ENCODE measurements at regions of chr1 and their contacts with region 1.

Region 1: GRCh38 chr1:150561974-150562445 is 12.8 kb downstream of the ADAMTSL4 start:
- DNase-seq: peak; percentile 94
- ATAC-seq: peak; percentile 48
- H3K4me3 Mint-ChIP-seq: peak overlapping the region; percentile 88
- H3K27ac Mint-ChIP-seq: peak overlapping the region; percentile 99
- H3K4me1 Mint-ChIP-seq: peaks cover 47% of the 10 kb centered on the region
- H3K27me3 Mint-ChIP-seq: no peaks in the 10 kb centered on the region
- CTCF ChIP-seq: no peak

Region 2: DNA sequence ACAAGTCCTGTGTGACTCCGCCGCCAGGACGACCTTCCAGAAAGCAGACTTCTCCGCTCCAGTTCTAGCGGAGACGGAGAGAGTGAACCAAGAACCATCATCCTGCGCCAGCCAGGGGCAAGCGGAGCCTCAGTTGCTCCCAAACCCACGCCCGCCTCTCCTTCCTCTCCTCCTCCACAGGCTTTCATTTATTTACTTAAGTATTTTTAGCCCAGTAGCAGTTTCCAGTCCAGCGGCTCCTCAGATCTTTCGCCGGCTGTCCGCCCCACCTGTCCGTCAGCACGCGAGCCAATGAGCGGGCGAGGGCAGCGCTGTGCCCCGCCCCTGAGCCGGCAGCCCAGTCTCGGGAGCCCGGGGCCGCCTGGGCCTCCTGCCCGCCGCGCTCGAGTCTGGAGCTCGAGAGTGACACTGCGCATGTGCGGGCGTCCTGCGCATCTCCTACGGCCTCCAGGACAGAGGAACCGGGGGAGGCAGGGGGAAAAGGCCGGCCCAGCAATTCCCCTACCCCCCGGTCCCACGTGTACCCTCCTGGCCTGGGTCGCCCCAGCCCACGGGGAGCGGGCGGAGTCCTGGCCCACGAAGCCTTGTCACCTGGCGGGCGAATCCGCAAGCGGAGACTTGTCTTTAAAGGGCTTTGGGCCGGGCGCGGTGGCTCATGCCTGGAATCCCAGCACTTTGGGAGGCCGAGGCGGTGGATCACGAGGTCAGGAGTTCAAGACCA is 46.5 kb before region 1 on chr1 and contains the start of gene FALEC:
- CTCF ChIA-PET with region 1: interaction called, 21 read pairs
- POLR2A ChIA-PET with region 1: interaction called, 3 read pairs
- intact Hi-C with region 1: no loop called
- DNase-seq: peak; percentile 92
- ATAC-seq: peak; percentile 100
- H3K4me3 Mint-ChIP-seq: peak within 1 kb of the TSS; percentile 92
- H3K27ac Mint-ChIP-seq: peak within 1 kb of the TSS; percentile 64
- H3K4me1 Mint-ChIP-seq: peaks cover 12% of the 10 kb centered on the region
- H3K27me3 Mint-ChIP-seq: no peaks in the 10 kb centered on the region
- CTCF ChIP-seq: no peak
- total RNA-seq, gene FALEC: not detected

Region 3: DNA sequence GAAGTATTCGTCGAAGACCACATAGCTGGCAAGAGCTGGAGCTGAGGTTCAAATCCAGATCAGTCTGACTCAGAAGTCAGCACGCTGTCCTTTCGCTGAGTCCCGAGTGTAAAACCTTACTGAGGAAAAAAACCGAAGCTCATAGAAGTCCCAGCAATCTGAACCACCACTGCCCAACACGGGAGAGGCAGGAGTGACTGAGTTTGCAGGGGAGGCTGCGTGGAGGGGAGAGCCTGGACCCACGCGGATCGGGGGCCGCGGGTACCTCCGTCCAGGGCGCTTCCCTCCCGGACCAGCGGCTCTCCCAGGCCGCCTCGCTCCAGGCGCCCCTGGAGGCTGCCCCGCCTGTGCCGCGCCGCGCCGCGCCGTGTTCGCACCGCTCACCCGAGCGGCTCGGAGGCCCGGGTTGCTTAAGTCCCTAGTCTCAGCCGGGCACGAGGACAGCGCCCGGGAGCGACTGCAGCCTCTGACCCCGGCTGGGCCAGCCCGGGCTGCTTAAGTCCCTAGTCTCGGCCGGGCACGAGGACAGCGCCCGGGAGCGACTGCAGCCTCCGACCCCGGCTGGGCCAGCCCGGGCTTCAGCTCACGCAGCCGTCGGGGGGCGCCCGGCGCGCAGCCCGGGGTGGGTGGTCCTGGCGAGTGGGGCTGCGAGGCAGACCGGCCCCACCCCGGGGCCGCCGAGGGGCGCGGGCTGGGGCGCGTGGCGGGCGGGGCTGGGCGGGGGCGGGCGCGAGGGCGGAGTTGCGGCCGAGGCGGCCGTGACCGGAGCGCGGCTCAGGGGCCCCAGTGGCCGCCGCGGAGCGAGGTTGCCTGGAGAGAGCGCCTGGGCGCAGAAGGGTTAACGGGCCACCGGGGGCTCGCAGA is 13.1 kb before region 1 on chr1 and contains the start of gene ADAMTSL4:
- CTCF ChIA-PET with region 1: interaction called, 45 read pairs
- POLR2A ChIA-PET with region 1: interaction called, 9 read pairs
- intact Hi-C with region 1: no loop called
- DNase-seq: peak; percentile 49
- ATAC-seq: peak; percentile 79
- H3K4me3 Mint-ChIP-seq: peak within 1 kb of the TSS; percentile 71
- H3K27ac Mint-ChIP-seq: peak within 1 kb of the TSS; percentile 38
- H3K4me1 Mint-ChIP-seq: peaks cover 29% of the 10 kb centered on the region
- H3K27me3 Mint-ChIP-seq: peaks cover 23% of the 10 kb centered on the region
- CTCF ChIP-seq: no peak
- total RNA-seq, gene ADAMTSL4: 0.11 to 0.20 TPM

Region 4: DNA sequence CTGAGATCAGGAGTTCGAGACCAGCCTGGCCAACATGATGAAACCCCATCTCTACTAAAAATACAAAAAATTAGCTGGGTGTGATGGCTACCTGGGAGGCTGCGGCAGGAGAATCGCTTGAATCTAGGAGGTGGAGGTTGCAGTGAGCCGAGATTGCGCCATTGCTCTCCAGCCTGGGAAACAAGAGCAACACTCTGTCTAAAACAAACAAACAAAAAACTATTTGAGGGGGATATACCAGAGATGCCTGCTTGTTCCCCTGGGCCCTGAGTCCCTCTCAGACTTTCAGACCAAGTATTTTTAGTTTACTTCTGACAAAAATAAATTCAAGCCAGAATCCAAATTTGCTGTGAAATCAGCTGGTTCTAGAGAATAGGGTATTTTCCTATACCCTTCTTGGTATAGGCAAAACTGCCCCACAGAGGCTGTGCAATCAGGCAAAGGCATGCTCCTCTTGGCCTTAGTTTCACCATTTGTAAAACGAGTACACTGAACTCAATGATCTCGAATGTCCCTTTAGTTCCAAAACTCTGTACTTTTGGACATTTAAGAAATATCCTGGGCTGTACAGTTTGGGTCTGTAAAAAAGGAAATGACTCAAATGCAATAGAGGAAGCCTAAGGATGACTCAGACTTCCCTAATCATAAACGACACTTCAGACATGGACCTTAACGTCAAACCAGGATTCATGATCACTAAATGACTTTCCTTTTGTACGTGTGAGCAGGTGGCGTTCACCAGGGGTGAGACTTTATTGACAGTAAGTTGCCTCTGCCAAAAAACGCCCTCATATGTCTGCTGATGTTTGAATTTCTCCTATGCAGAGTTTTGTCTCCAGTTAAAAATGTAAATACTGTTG is 51.3 kb after region 1 on chr1:
- CTCF ChIA-PET with region 1: interaction called, 324 read pairs
- POLR2A ChIA-PET with region 1: interaction called, 678 read pairs
- intact Hi-C with region 1: loop called (anchors 2 kb)
- DNase-seq: peak; percentile 83
- ATAC-seq: peak; percentile 62
- H3K4me3 Mint-ChIP-seq: peak overlapping the region; percentile 45
- H3K27ac Mint-ChIP-seq: peak overlapping the region; percentile 91
- H3K4me1 Mint-ChIP-seq: peaks cover 62% of the 10 kb centered on the region
- H3K27me3 Mint-ChIP-seq: no peaks in the 10 kb centered on the region
- CTCF ChIP-seq: no peak

Region 5: GRCh38 chr1:150696590-150697524 is 134.8 kb after region 1 on chr1 and contains the start of gene GOLPH3L:
- CTCF ChIA-PET with region 1: interaction called, 14 read pairs
- POLR2A ChIA-PET with region 1: interaction called, 4 read pairs
- intact Hi-C with region 1: loop called (anchors 10 kb)
- DNase-seq: peak; percentile 96
- ATAC-seq: peak; percentile 100
- H3K4me3 Mint-ChIP-seq: peak within 1 kb of the TSS; percentile 94
- H3K27ac Mint-ChIP-seq: peak within 1 kb of the TSS; percentile 92
- H3K4me1 Mint-ChIP-seq: peaks cover 14% of the 10 kb centered on the region
- H3K27me3 Mint-ChIP-seq: peaks cover 1% of the 10 kb centered on the region
- CTCF ChIP-seq: no peak
- total RNA-seq, gene GOLPH3L: 15.8 to 16.9 TPM

Region 6: GRCh38 chr1:150798525-150798924 is 236.5 kb after region 1 on chr1:
- CTCF ChIA-PET with region 1: no interaction called
- POLR2A ChIA-PET with region 1: no interaction called
- intact Hi-C with region 1: no loop called
- DNase-seq: no peak
- ATAC-seq: no peak
- H3K4me3 Mint-ChIP-seq: no peak overlapping the region
- H3K27ac Mint-ChIP-seq: no peak overlapping the region
- H3K4me1 Mint-ChIP-seq: no peaks in the 10 kb centered on the region
- H3K27me3 Mint-ChIP-seq: no peaks in the 10 kb centered on the region
- CTCF ChIP-seq: no peak

Measured in activated CD8-positive, alpha-beta T cell treated with anti-CD3 and anti-CD28 coated beads for 36 hours (primary cell).